ENCODE measurements at regions of chr11 and their contacts with region 1.

Region 1: DNA sequence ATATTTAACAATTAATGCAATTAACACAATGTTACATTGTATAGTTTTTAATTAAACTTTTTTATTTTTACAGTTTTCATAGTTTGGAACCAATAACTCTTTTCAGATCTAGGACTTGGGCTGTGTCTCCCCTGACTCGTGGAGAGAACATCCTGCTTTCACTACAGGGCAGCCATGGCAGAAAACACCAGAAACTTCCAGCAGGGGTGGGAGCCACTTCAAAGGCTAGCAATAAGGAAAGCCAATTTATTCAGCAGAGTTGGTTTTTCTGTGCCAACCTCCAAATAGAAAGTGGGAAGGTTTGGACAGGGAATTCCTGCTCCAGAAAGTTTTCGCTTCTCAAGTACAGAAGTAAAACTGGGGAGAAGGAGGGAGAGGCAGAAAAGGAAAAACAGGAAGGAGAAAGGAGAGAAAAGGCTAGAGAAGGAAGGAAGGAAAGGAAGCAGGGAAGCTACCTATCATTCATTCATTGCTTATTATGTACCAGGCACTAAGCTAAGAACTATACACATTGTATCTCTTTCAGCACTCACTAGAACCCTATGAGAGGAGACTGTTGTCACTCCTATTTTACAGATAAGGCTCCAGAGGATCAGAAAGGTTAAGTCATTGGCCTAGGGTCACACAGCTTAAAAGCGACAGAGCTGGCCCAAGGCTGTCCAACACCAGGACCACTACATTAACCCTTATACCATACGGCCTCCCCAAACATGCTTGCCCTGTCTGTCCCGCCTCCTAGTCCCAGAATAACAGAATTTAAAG is 54.8 kb upstream of the CREB3L1 start:
- DNase-seq: no peak
- H3K4me3 ChIP-seq: no peak overlapping the region
- H3K27ac ChIP-seq: no peak overlapping the region
- H3K4me1 ChIP-seq: no peaks in the 10 kb centered on the region
- H3K27me3 ChIP-seq: no peaks in the 10 kb centered on the region
- CTCF ChIP-seq: no peak
- EP300 ChIP-seq: no peak
- POLR2A ChIP-seq: no peak

Region 2: DNA sequence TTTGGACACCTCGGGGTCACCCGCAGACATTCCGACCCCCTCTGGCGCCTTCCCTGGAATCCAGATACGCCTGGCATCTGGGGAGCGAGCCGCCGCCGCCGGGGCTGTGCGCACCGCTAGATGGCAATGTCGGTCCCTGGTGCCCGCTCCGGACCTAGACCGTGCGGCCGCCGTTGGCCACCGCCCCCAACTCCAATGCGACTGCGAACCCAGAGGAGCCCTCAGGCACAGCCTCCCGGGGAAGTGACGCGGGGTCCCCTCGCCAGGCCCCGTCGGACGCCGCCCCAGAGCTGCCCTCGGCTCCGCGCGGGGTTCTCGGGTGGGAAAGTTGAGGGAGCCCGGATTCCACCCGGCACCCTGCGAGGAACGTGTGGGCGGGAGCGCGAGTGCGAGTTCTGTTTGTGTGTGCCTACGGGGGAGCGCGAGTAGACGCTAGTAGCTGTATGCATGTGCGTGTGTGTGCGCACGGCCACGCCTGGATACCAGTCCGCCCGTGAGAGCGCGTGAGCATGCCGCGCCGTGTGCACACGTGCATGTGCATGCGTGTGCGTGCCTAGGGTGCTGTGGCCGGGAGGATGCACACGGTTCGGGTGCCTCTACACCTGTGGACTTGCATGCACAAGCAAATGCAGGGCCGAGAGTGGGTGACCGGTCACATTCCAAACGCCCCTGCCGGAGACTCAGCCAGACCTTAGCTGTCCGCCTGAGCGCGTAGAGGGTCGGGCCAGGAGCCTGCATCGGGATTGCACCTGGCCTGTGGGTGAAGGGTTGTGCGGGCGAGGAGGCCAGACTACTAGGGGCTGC is 167.0 kb after region 1 on chr11:
- intact Hi-C with region 1: no loop called
- DNase-seq: peak; percentile 50 to 80 (median 67)
- H3K4me3 ChIP-seq: peak overlapping the region; percentile 2
- H3K27ac ChIP-seq: no peak overlapping the region
- H3K4me1 ChIP-seq: peaks cover 19% of the 10 kb centered on the region
- H3K27me3 ChIP-seq: peaks cover 6% of the 10 kb centered on the region
- CTCF ChIP-seq: peak; percentile 56 to 65 (median 61)
- EP300 ChIP-seq: no peak
- POLR2A ChIP-seq: no peak

Region 3: DNA sequence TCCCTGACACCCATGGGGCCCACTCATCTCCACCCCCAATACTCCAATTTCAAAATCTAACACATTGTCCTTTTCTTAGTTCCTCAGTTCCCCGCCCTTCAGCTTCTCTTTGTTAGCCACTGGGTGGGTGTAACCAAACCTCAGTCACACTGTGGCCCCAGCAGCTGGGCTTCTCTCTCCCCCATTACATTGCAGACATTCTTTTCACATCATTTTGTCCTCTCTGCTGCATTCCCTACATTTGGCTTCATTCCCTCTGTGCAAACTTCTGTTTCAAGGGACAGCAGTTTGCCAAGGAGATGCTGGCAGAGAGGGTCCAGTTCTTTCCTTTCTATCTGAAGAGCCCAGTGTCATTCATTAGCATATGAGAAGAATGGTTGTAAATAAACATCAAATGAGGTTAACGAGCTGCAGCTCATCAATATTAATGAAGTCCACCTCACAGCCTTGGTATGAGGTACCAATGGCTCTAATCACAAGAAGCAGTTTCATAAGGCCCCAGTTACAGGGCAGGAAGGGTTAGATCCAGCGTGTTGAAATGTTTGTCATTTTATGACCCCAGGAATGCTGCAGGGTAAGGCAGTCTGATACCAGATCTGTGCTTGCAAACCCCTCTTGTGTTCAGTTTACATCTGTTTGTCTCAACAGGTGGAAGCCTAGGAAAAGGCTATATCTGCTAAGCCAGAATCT is 881.7 kb after region 1 on chr11:
- intact Hi-C with region 1: loop called in 1 of 4 experiments (anchors 10 kb)
- DNase-seq: no peak
- H3K4me3 ChIP-seq: no peak overlapping the region
- H3K27ac ChIP-seq: no peak overlapping the region
- H3K4me1 ChIP-seq: no peaks in the 10 kb centered on the region
- H3K27me3 ChIP-seq: no peaks in the 10 kb centered on the region
- CTCF ChIP-seq: no peak
- EP300 ChIP-seq: no peak
- POLR2A ChIP-seq: no peak